Ovary (tissue), 10 donors: ENCODE measurements at regions of chr1 and their contacts with region 1.

Region 1: GRCh38 chr1:159891275-159892157 is 8.4 kb downstream of the CFAP45 start:
- DNase-seq: peak; percentile 80 to 87 (median 86)
- H3K4me3 ChIP-seq: no peak overlapping the region
- H3K27ac ChIP-seq: no peak overlapping the region
- H3K4me1 ChIP-seq: no peaks in the 10 kb centered on the region
- H3K27me3 ChIP-seq: no peaks in the 10 kb centered on the region
- CTCF ChIP-seq: peak; percentile 89 to 96 (median 95)
- EP300 ChIP-seq: no peak
- POLR2A ChIP-seq: no peak

Region 2: DNA sequence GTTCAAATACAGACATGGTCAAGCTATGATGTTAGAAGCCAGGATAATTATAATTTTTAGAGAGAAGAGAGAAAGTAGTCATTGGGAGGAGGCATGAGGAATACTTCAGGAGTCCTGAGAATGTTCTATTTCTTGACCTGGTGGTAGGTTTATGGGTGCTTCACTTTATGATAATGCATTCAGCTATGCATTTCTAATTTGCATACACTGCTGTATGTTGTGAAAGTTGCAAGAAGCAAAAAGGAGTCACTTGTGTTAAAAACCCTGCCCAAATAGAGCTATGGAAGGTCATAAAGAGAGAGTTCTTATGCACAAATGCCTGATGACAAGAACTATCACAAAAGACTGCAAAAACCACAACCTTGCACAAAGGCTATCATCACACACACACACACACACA is 258.6 kb before region 1 on chr1:
- intact Hi-C with region 1: loop called in 1 of 4 experiments (anchors 5 kb)
- DNase-seq: no peak
- H3K4me3 ChIP-seq: no peak overlapping the region
- H3K27ac ChIP-seq: no peak overlapping the region
- H3K4me1 ChIP-seq: no peaks in the 10 kb centered on the region
- H3K27me3 ChIP-seq: no peaks in the 10 kb centered on the region
- CTCF ChIP-seq: no peak
- EP300 ChIP-seq: no peak
- POLR2A ChIP-seq: no peak

Region 3: GRCh38 chr1:159752135-159752580 is 139.4 kb before region 1 on chr1:
- intact Hi-C with region 1: no loop called
- DNase-seq: peak in 3 of 5 donors; percentile 26 to 72 (median 32)
- H3K4me3 ChIP-seq: no peak overlapping the region
- H3K27ac ChIP-seq: no peak overlapping the region
- H3K4me1 ChIP-seq: no peaks in the 10 kb centered on the region
- H3K27me3 ChIP-seq: no peaks in the 10 kb centered on the region
- CTCF ChIP-seq: no peak
- EP300 ChIP-seq: peak; percentile 66
- POLR2A ChIP-seq: no peak

Region 4: DNA sequence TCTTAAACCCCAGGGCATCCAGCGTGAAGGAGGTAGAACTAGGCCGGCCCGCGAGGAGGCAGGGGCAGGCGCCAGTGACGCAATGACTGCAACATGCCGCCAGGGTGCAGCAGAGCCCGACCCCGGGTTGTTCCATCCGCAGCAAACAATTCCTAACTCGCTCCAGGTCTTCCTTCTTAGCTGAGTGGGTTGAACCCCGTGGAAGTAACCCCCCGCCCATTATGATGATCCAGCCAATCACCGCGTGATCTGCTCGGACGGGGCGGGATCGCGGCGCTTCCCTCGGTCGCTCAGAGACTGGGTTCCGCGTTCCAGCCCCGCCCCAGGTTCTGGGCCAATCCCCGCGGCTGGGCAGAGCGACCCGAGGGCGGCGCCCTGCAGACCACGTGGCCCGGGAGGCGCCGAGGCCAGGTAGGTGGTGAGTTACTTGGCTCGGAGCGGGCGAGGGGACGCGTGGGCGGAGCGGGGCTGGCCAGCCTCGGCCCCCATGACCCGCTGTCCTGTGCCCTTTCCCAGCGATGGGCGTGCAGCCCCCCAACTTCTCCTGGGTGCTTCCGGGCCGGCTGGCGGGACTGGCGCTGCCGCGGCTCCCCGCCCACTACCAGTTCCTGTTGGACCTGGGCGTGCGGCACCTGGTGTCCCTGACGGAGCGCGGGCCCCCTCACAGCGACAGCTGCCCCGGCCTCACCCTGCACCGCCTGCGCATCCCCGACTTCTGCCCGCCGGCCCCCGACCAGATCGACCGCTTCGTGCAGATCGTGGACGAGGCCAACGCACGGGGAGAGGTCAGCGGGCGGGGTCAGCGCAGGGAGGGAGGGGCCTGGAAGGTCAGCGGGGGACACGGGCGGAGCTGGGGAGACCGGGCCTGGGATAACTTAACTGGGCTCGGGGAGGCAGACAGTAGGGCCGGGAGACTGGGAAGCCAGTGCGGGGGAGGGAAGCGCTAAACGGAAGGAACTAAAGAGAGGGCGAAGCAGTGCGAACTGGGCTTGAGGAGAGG is 110.6 kb before region 1 on chr1 and contains the start of gene DUSP23:
- intact Hi-C with region 1: loop called in 2 of 4 experiments (anchors 5 kb)
- DNase-seq: peak; percentile 96 to 98 (median 98)
- H3K4me3 ChIP-seq: peak within 1 kb of the TSS; percentile 68
- H3K27ac ChIP-seq: peak within 1 kb of the TSS; percentile 18 to 75
- H3K4me1 ChIP-seq: no peaks in the 10 kb centered on the region
- H3K27me3 ChIP-seq: no peaks in the 10 kb centered on the region
- CTCF ChIP-seq: peak; percentile 93 to 96 (median 95)
- EP300 ChIP-seq: peak; percentile 11
- POLR2A ChIP-seq: peak; percentile 70
- total RNA-seq, gene DUSP23: 26.9 to 115 (median 37.5) TPM

Region 5: DNA sequence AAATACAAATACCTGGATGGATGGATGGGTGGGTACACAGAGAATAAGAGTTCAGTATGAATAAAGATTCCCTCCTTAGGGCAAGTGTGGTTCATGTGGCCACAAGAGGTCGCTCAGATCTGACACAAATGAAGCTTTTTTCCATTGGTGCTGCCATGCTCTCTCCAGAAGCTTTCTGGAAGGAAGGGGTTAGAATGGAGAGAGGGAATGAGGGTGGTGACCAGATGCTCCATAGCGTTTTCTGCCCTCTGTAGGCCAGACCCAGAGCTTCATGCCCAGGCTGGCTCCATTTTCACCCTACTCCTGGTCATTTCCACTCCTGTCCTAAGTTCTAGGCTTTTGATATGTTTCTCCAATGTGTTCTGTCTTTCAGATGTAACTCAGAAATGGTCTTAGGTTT is 92.6 kb before region 1 on chr1:
- intact Hi-C with region 1: loop called (anchors 2 to 5 kb)
- DNase-seq: peak; percentile 55 to 77 (median 64)
- H3K4me3 ChIP-seq: no peak overlapping the region
- H3K27ac ChIP-seq: no peak overlapping the region
- H3K4me1 ChIP-seq: peaks cover under 1% of the 10 kb centered on the region
- H3K27me3 ChIP-seq: no peaks in the 10 kb centered on the region
- CTCF ChIP-seq: peak; percentile 60 to 69 (median 63)
- EP300 ChIP-seq: no peak
- POLR2A ChIP-seq: peak; percentile 20

Region 6: DNA sequence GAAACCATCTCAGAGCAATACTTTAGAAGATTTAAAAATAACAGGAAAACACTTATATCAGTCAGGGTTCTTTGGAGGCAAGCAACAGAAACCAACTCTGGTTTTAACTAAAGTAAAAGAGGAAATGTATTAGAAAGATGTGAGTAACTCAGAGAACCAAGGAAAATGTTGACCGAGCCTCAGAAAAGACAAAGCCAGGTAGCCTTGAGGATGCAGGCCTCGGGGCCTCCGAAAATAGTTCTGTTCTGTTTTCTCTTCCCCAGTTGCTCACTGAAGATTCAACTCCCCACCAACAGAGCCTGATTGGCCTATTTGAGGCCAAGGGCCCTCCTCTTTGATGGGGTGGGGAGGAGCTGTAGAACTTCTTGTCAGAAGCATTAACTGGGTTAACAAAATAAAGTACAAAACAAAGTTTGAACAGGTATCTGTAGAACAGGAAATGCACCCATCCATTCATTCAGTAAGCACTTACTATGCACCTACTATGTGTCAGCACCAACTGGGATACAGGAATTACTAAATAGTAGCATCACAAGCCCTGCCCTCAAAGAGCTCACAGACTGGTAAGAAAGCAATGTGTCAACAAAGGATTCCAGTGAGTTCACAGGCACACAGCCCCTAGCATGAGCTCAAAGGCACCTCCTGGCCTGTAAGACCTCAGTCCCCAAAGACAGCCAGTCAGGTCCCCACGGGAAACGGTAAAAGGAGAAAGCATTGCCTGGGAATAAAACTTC is 52.2 kb before region 1 on chr1:
- intact Hi-C with region 1: no loop called
- DNase-seq: no peak
- H3K4me3 ChIP-seq: no peak overlapping the region
- H3K27ac ChIP-seq: no peak overlapping the region
- H3K4me1 ChIP-seq: no peaks in the 10 kb centered on the region
- H3K27me3 ChIP-seq: no peaks in the 10 kb centered on the region
- CTCF ChIP-seq: no peak
- EP300 ChIP-seq: no peak
- POLR2A ChIP-seq: no peak

Region 7: DNA sequence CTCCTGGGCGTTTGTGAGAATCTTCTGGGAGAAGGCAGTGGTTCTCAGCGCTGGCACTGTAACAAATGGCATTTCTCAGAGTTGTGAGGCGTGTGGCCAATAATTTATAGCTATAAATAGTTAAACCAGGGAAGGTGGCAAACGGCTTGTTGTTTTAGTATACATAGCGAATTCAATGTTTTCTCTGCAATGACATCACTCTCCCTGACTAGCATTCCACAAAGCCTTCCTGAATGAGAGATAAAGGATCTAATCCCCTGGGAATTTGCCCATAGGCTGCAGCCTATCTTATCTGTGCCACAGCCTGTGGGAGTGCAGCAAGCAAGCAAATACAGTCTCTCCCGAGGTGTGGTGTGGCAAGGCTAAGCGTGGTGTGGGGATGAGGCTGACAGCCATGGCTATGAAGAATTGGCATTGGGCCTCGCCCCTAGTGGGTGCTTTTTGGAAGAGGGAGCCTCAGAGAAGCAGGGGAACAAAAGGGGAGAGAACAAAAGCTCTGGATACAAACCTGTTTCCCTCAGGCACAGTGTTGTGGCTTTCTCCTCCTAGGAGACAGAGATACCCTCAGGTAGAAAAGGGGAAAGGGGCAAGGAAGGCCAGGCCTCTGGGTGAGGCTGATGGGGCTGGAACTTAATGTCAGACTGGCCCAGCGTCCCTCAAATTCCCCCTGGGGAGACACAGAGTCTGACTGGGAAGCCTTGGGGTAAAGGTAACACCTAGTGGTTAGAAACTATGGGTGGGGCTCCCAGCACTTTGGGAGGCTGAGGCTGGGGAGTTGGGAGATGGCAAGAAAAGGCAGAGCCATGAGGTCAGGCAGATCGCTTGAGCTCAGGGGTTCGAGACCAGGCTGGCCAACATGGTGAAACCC is 24.9 kb after region 1 on chr1:
- intact Hi-C with region 1: no loop called
- DNase-seq: no peak
- H3K4me3 ChIP-seq: no peak overlapping the region
- H3K27ac ChIP-seq: peak overlapping the region in 1 of 2 donors; percentile 33
- H3K4me1 ChIP-seq: peaks cover 2% of the 10 kb centered on the region
- H3K27me3 ChIP-seq: no peaks in the 10 kb centered on the region
- CTCF ChIP-seq: no peak
- EP300 ChIP-seq: no peak
- POLR2A ChIP-seq: no peak

Region 8: DNA sequence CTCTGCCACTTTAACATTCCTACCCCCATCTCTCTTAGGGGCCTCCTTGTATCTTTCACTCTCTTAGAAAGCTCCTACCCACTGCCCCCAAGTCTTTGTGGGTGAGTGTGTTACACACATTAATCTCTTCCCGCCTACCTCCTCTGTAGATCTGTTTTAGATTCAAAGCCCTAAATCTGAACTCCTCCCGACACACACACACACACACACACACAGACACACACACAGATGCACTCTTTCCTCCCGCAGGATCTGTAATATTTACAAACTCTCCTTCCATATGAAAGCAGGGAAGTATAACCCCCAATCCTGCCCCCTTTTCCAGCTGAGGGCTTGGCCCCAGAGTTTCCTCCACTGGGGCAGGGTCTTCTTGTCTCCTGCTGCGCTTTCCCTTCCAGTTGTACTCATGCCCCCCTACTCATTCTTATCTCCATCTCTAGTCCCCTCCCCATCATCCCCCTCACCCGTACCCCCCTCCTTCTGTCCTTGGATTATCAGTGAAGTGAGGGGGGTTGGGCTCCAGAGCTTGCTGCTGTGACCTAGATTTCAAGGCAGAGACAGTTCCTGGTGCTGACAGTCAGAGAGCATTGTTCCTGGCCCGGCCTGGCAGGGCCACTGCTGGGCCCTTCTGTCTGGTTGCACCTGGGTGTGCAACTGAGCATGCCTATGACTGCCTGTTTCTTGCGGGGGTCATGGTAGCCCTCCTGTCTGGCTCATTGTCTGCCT is 318.0 kb after region 1 on chr1:
- intact Hi-C with region 1: no loop called
- DNase-seq: peak in 2 of 5 donors; percentile 19 to 59
- H3K4me3 ChIP-seq: no peak overlapping the region
- H3K27ac ChIP-seq: no peak overlapping the region
- H3K4me1 ChIP-seq: peaks cover 20% of the 10 kb centered on the region
- H3K27me3 ChIP-seq: no peaks in the 10 kb centered on the region
- CTCF ChIP-seq: no peak
- EP300 ChIP-seq: no peak
- POLR2A ChIP-seq: no peak